Endothelial cell of umbilical vein (primary cell): ENCODE measurements at regions of chr21 and their contacts with region 1.

Region 1: GRCh38 chr21:28410256-28410655 is 582.4 kb downstream of the LTN1 start:
- DNase-seq: no peak
- H3K4me3 ChIP-seq: no peak overlapping the region
- H3K27ac ChIP-seq: no peak overlapping the region
- H3K4me1 ChIP-seq: no peaks in the 10 kb centered on the region
- H3K27me3 ChIP-seq: no peaks in the 10 kb centered on the region
- CTCF ChIP-seq: no peak
- POLR2A ChIP-seq: no peak

Region 2: GRCh38 chr21:28345934-28346333 is 64.3 kb before region 1 on chr21:
- CTCF ChIA-PET with region 1: no interaction called
- POLR2A ChIA-PET with region 1: no interaction called
- dilution Hi-C with region 1: no loop called
- intact Hi-C with region 1: loop called (anchors 5 kb)
- DNase-seq: no peak
- H3K4me3 ChIP-seq: no peak overlapping the region
- H3K27ac ChIP-seq: no peak overlapping the region
- H3K4me1 ChIP-seq: no peaks in the 10 kb centered on the region
- H3K27me3 ChIP-seq: no peaks in the 10 kb centered on the region
- CTCF ChIP-seq: no peak
- POLR2A ChIP-seq: no peak

Region 3: GRCh38 chr21:28387220-28387619 is 23.0 kb before region 1 on chr21:
- CTCF ChIA-PET with region 1: no interaction called
- POLR2A ChIA-PET with region 1: no interaction called
- dilution Hi-C with region 1: no loop called
- intact Hi-C with region 1: no loop called
- DNase-seq: no peak
- H3K4me3 ChIP-seq: no peak overlapping the region
- H3K27ac ChIP-seq: no peak overlapping the region
- H3K4me1 ChIP-seq: no peaks in the 10 kb centered on the region
- H3K27me3 ChIP-seq: no peaks in the 10 kb centered on the region
- CTCF ChIP-seq: no peak
- POLR2A ChIP-seq: no peak

Region 4: GRCh38 chr21:28455253-28455600 is 45.0 kb after region 1 on chr21:
- CTCF ChIA-PET with region 1: no interaction called
- POLR2A ChIA-PET with region 1: no interaction called
- dilution Hi-C with region 1: no loop called
- intact Hi-C with region 1: no loop called
- DNase-seq: no peak
- H3K4me3 ChIP-seq: no peak overlapping the region
- H3K27ac ChIP-seq: no peak overlapping the region
- H3K4me1 ChIP-seq: no peaks in the 10 kb centered on the region
- H3K27me3 ChIP-seq: no peaks in the 10 kb centered on the region
- CTCF ChIP-seq: no peak
- POLR2A ChIP-seq: no peak